Psoas muscle (tissue), 8 donors: ENCODE measurements at regions of chr15 and their contacts with region 1.

Region 1: DNA sequence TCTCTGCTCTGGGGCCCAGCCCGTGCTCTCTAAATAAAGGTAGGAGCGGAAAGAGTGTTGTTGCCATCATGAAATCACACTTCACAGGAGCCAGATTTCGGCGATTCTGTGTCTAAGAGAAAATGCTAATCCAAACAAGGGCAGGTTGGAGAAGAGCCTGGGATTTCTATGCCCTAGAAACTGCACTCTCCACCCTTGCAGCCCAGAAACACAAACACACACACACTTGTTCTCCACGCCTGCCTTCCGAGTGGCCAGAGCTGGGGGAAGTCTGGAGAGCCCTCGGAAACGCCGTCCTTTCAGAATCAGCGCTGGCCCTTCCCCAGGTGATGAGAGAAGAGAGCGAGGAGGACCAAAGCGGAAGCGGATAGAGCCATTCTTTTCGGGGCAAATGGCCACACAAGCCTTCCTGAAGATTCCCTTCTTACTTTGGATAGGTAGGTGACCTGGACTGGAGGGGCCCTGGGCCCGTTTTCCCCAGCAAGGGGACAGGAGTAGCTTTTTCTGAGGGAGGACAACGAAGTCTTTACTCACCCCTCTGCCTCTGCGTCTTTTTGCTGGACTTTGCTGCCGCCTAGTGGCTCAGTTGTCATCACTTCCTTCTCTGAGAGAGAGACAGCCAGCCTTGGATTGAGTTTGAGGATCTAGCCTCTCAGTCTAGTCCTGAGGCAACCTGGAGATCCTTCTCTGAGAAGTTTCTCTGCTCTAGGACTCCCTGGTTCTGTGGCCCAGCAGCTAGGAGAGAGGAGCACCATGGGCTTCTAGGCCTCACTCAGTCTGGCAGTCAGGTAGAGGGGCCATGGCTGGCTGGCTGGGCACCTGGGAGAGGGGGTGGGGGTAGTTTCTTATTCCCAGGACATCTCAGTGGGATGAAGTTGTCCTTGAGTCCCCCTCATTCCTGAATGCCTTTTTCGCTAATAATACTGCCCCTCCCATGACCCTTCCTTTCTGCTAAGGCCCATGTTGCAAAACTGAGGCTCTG is 37.7 kb downstream of the SENP8 start:
- DNase-seq: peak; percentile 84 to 90
- ATAC-seq: peak; percentile 89 to 97 (median 92)
- H3K4me3 ChIP-seq: peak overlapping the region; percentile 68
- H3K27ac ChIP-seq: no peak overlapping the region
- H3K4me1 ChIP-seq: peaks cover 6% of the 10 kb centered on the region
- H3K27me3 ChIP-seq: no peaks in the 10 kb centered on the region
- CTCF ChIP-seq: peak; percentile 83

Region 2: GRCh38 chr15:71743861-71744382 is 412.0 kb before region 1 on chr15:
- intact Hi-C with region 1: loop called (anchors 10 kb)
- DNase-seq: peak; percentile 42 to 61
- ATAC-seq: peak in 2 of 4 donors; percentile 53 to 69
- H3K4me3 ChIP-seq: no peak overlapping the region
- H3K27ac ChIP-seq: no peak overlapping the region
- H3K4me1 ChIP-seq: no peaks in the 10 kb centered on the region
- H3K27me3 ChIP-seq: no peaks in the 10 kb centered on the region
- CTCF ChIP-seq: peak; percentile 87

Region 3: GRCh38 chr15:71780115-71780976 is 375.6 kb before region 1 on chr15:
- intact Hi-C with region 1: loop called in 1 of 2 experiments (anchors 5 kb)
- DNase-seq: no peak
- ATAC-seq: peak in 1 of 4 donors; percentile 38
- H3K4me3 ChIP-seq: no peak overlapping the region
- H3K27ac ChIP-seq: no peak overlapping the region
- H3K4me1 ChIP-seq: peaks cover 6% of the 10 kb centered on the region
- H3K27me3 ChIP-seq: peaks cover 0 to 2% (median 0%) of the 10 kb centered on the region in 3 donors
- CTCF ChIP-seq: peak; percentile 58

Region 4: GRCh38 chr15:71891026-71891425 is 264.9 kb before region 1 on chr15:
- intact Hi-C with region 1: loop called in 1 of 2 experiments (anchors 10 kb)
- DNase-seq: peak in 1 of 2 donors; percentile 14
- ATAC-seq: peak; percentile 85 to 98 (median 96)
- H3K4me3 ChIP-seq: no peak overlapping the region
- H3K27ac ChIP-seq: peak overlapping the region; percentile 0
- H3K4me1 ChIP-seq: peaks cover 4% of the 10 kb centered on the region
- H3K27me3 ChIP-seq: no peaks in the 10 kb centered on the region
- CTCF ChIP-seq: no peak

Region 5: DNA sequence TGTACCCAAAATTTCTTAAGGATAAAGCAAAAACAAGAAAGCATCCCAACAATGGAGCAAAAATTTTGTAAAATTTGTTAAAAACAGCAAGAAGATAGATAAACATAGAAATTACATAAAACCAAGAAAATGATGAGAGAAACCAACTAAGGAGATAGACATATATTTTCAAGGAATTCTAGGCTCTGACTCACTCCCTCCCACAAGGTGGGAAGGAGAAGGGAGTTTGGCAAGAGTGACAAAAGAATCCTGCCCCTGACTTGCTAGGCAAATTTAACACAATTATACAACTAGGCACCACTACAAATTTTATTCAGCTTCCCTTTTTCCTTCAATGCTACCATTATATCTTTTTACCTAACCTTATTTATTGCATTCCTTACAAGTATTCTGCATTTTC is 108.9 kb before region 1 on chr15:
- intact Hi-C with region 1: loop called in 1 of 2 experiments (anchors 10 kb)
- DNase-seq: no peak
- ATAC-seq: no peak
- H3K4me3 ChIP-seq: no peak overlapping the region
- H3K27ac ChIP-seq: no peak overlapping the region
- H3K4me1 ChIP-seq: peaks cover 16% of the 10 kb centered on the region
- H3K27me3 ChIP-seq: no peaks in the 10 kb centered on the region
- CTCF ChIP-seq: no peak